ENCODE measurements at regions of chr6 and their contacts with region 1.

Region 1: DNA sequence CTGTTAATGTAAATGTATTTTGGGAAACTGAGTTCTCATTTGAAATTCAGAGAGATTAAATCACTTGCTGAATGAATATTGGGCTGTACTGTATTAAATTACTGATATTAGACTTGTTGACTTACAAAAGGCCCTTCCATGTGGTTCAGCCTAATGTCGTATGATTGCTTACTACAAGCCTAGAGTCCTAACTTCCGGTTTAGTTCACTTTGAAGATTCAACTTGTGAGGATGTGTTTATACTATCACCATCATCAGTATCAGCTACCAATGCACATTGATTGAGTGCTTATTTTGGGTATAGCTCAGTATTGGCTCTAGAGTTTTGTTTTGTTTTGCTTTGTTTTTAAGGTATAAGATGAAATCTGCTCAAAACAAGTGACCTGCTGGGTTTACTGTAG is 48.3 kb downstream of the FAM217A start:
- DNase-seq: no peak
- H3K4me3 ChIP-seq: no peak overlapping the region
- H3K27ac ChIP-seq: peak overlapping the region in 1 of 2 experiments; percentile 3
- H3K4me1 ChIP-seq: peaks cover 0 to 4% (median 0%) of the 10 kb centered on the region in 4 experiments
- H3K27me3 ChIP-seq: no peaks in the 10 kb centered on the region

Region 2: DNA sequence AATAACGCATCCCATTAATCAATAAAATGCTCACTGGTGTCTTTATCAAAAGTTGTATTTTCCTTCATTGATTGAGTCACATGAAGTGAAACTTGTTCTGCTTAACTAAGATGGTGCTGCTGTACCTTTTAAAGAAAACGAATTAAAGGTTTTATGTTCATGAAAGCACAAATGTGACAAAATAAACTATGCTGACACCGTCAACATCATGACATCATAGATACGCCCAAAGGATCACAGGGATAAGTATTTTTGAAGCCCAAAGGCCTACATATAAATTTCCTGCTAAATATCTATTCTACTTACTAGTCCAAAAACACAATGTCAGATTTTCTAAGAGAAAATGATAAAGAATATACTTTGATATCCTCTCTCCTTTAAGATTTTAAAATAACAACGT is 46.2 kb before region 1 on chr6:
- CTCF ChIA-PET with region 1: no interaction called
- POLR2A ChIA-PET with region 1: no interaction called
- DNase-seq: no peak
- H3K4me3 ChIP-seq: no peak overlapping the region
- H3K27ac ChIP-seq: no peak overlapping the region
- H3K4me1 ChIP-seq: no peaks in the 10 kb centered on the region
- H3K27me3 ChIP-seq: no peaks in the 10 kb centered on the region

Region 3: GRCh38 chr6:4018172-4018905 is 12.3 kb before region 1 on chr6:
- CTCF ChIA-PET with region 1: interaction called, 15 read pairs
- POLR2A ChIA-PET with region 1: no interaction called
- DNase-seq: peak; percentile 95 to 97 (median 97)
- H3K4me3 ChIP-seq: peak overlapping the region; percentile 64 to 95 (median 86)
- H3K27ac ChIP-seq: peak overlapping the region; percentile 90 to 97
- H3K4me1 ChIP-seq: peaks cover 21 to 49% (median 43%) of the 10 kb centered on the region in 4 experiments
- H3K27me3 ChIP-seq: no peaks in the 10 kb centered on the region